ENCODE measurements at regions of chr1 and their contacts with region 1.

Region 1: DNA sequence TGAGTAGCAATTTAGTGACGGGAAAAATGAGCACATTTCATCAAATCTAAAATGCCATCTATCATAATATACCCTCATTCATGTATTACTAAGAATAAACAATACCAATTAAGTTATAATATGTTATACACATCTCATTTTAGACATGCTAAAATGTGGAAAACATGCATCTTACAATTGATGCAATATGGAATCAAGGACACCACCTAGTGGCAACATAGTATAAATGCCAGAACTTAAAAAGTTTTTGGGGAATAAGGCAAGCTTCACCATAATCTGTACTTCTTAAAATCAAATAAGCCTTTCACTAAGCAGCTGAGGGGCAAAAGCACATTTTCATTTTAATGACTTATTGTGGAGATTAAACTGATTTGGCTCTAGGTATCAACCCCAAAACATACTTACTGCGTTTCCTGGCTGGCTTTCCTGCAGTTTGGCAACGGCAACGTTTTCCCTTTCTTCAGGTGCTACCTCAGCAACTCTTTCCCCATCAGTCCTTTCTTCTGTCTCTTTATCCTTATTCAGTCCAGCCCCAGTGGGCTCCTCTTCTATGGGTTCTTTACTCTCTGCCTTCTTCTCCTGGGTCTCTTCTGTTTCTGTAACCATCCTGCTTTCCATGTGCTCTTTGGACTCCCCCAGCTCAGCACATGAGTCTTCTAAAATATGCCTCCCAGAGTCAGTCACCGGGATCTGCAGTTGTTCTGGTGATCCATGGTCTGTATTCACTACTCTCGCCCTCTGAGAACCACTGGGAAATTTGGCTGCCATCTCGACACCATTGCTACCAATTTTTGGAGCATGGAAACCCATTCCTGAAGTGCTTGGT is 11.4 kb downstream of the SDE2 start:
- DNase-seq: peak in 4 of 5 donors; percentile 27 to 45 (median 40)
- H3K4me3 ChIP-seq: no peak overlapping the region
- H3K4me3 Mint-ChIP-seq: no peak overlapping the region
- H3K27ac ChIP-seq: no peak overlapping the region
- H3K27ac Mint-ChIP-seq: peak overlapping the region in 5 of 7 donors; percentile 37 to 80 (median 51)
- H3K4me1 ChIP-seq: peaks cover 19% of the 10 kb centered on the region
- H3K4me1 Mint-ChIP-seq: peaks cover 17 to 37% (median 27%) of the 10 kb centered on the region in 4 donors
- H3K27me3 ChIP-seq: no peaks in the 10 kb centered on the region
- H3K27me3 Mint-ChIP-seq: no peaks in the 10 kb centered on the region

Region 2: GRCh38 chr1:225480825-225481434 is 506.8 kb before region 1 on chr1:
- CTCF ChIA-PET with region 1: interaction called, 19 read pairs
- POLR2A ChIA-PET with region 1: no interaction called
- intact Hi-C with region 1: no loop called
- DNase-seq: peak in 4 of 5 donors; percentile 32 to 41 (median 38)
- H3K4me3 ChIP-seq: no peak overlapping the region
- H3K4me3 Mint-ChIP-seq: no peak overlapping the region
- H3K27ac ChIP-seq: no peak overlapping the region
- H3K27ac Mint-ChIP-seq: peak overlapping the region in 1 of 7 donors; percentile 51
- H3K4me1 ChIP-seq: peaks cover 22% of the 10 kb centered on the region
- H3K4me1 Mint-ChIP-seq: peaks cover 16 to 25% (median 21%) of the 10 kb centered on the region in 4 donors
- H3K27me3 ChIP-seq: no peaks in the 10 kb centered on the region
- H3K27me3 Mint-ChIP-seq: peaks cover 4 to 6% of the 10 kb centered on the region in 2 donors

Region 3: DNA sequence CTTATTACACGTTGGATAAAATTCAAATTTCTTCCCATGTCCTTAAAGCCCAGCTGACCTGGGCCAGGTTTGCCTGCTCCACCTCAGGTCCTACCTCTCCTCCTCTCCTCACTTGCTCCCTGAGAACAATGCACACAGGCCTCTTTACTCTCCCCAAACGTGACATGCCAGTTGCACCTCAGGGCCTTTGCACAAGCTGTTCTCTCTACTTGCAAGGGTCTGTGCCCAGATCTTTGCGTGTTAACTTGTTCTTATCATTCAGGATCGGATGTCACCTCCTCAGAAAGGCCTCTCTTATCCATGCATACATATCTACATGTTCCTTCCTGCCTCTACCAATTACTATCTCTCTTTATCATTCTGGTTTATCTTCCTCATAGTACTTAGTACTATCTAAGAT is 84.1 kb before region 1 on chr1:
- CTCF ChIA-PET with region 1: no interaction called
- POLR2A ChIA-PET with region 1: no interaction called
- intact Hi-C with region 1: no loop called
- DNase-seq: no peak
- H3K4me3 ChIP-seq: no peak overlapping the region
- H3K4me3 Mint-ChIP-seq: no peak overlapping the region
- H3K27ac ChIP-seq: no peak overlapping the region
- H3K27ac Mint-ChIP-seq: peak overlapping the region in 6 of 7 donors; percentile 8 to 50 (median 22)
- H3K4me1 ChIP-seq: peaks cover 17% of the 10 kb centered on the region
- H3K4me1 Mint-ChIP-seq: peaks cover 24 to 33% (median 28%) of the 10 kb centered on the region in 4 donors
- H3K27me3 ChIP-seq: no peaks in the 10 kb centered on the region
- H3K27me3 Mint-ChIP-seq: no peaks in the 10 kb centered on the region